ENCODE measurements at regions of chr5 and their contacts with region 1.

Region 1: GRCh38 chr5:80487829-80488721 is at the start of gene FAM151B:
- DNase-seq: peak; percentile 85
- H3K4me3 Mint-ChIP-seq: peak within 1 kb of the TSS; percentile 79
- H3K27ac Mint-ChIP-seq: no peak within 1 kb of the TSS
- H3K4me1 Mint-ChIP-seq: peaks cover 13% of the 10 kb centered on the region
- H3K27me3 Mint-ChIP-seq: no peaks in the 10 kb centered on the region
- total RNA-seq, gene FAM151B: 0.15 to 0.36 TPM

Region 2: GRCh38 chr5:80569961-80570786 is 82.1 kb after region 1 on chr5 and contains the start of gene ANKRD34B:
- CTCF ChIA-PET with region 1: no interaction called
- intact Hi-C with region 1: loop called (anchors 1 kb)
- DNase-seq: peak; percentile 65
- H3K4me3 Mint-ChIP-seq: peak within 1 kb of the TSS; percentile 60
- H3K27ac Mint-ChIP-seq: no peak within 1 kb of the TSS
- H3K4me1 Mint-ChIP-seq: peaks cover 5% of the 10 kb centered on the region
- H3K27me3 Mint-ChIP-seq: peaks cover 52% of the 10 kb centered on the region
- total RNA-seq, gene ANKRD34B: 0.10 TPM in 1 of 2 experiments, not detected in the other

Region 3: GRCh38 chr5:80654391-80655230 is 166.5 kb after region 1 on chr5 and contains the starts of genes DHFR and MSH3:
- CTCF ChIA-PET with region 1: no interaction called
- intact Hi-C with region 1: loop called (anchors 1 kb)
- DNase-seq: peak; percentile 95
- H3K4me3 Mint-ChIP-seq: peak within 1 kb of the TSS; percentile 95
- H3K27ac Mint-ChIP-seq: peak within 1 kb of the TSS; percentile 99
- H3K4me1 Mint-ChIP-seq: peaks cover 25% of the 10 kb centered on the region
- H3K27me3 Mint-ChIP-seq: no peaks in the 10 kb centered on the region
- total RNA-seq, gene DHFR: 107 to 112 TPM
- total RNA-seq, gene MSH3: 25.1 to 25.8 TPM

Measured in activated naive CD4-positive, alpha-beta T cell treated with anti-CD3 and anti-CD28 coated beads for 36 hours (primary cell).